ENCODE measurements at regions of chr18 and their contacts with region 1.

Region 1: GRCh38 chr18:10536280-10536679 is 10.5 kb downstream of the NAPG start:
- DNase-seq: no peak
- CTCF ChIP-seq: no peak

Region 2: DNA sequence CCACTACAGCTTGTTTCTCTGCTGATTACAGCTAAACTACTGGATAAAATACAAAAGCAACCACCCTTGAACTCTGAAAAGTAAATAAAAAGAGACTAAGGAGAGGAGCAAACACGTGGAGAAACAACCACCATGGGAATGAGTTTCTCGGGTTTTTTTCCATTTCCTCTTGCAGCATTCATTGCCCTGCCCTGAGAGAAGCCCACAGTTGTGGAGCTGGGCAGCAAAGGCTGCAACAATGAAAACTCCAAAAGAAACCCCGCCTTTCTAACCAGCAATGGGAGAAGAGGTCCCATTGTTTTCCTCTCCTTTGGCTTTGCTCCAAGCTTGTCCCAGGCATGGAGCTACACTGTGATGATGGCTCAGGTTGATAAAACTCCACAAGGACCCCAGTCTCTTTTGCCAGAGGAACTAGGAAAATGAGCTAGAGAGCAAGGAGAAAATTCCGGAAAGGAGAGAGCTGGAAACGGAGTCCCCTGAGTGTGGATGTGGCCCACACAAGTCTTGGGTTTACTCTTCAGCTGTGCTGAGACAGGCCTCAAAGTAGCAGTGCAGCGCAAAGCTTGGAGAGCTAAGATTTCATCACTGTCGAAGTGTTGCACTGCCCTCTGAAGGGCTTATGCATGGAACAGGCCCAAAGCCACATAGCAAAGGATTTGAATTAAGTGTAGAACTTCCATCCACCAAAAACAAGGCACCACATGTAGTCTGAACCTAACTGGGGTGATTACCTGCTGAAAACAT is 10.4 kb after region 1 on chr18:
- CTCF ChIA-PET with region 1: interaction called, 29 read pairs
- POLR2A ChIA-PET with region 1: no interaction called
- DNase-seq: no peak
- CTCF ChIP-seq: no peak

Measured in GM10248 (cell line).